Posterior vena cava (tissue), 2 donors: ENCODE measurements at regions of chr1 and their contacts with region 1.

Region 1: GRCh38 chr1:51535006-51535592 is 16.0 kb upstream of the EPS15 start:
- DNase-seq: no peak

Region 2: DNA sequence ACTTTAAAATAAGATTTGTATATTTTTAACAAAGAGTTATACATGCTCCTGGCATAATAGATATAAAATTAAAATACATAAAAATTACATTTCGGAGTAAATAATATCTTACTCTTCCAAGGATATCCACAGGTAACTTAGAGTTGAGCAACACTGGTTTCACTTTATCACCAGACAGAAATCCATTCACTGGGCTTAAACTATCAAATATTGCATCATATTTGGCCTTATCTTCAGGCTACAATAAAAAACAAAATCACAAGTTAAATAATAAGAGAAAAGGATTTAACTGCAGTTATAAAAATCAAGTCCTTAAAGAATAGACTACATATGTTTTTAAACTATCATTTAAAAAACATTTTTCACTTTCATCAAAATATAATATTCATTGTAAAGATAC is 71.5 kb before region 1 on chr1:
- intact Hi-C with region 1: loop called in 1 of 2 experiments (anchors 10 kb)
- DNase-seq: no peak